H1 (cell line): ENCODE measurements at regions of chr10 and their contacts with region 1.

Region 1: DNA sequence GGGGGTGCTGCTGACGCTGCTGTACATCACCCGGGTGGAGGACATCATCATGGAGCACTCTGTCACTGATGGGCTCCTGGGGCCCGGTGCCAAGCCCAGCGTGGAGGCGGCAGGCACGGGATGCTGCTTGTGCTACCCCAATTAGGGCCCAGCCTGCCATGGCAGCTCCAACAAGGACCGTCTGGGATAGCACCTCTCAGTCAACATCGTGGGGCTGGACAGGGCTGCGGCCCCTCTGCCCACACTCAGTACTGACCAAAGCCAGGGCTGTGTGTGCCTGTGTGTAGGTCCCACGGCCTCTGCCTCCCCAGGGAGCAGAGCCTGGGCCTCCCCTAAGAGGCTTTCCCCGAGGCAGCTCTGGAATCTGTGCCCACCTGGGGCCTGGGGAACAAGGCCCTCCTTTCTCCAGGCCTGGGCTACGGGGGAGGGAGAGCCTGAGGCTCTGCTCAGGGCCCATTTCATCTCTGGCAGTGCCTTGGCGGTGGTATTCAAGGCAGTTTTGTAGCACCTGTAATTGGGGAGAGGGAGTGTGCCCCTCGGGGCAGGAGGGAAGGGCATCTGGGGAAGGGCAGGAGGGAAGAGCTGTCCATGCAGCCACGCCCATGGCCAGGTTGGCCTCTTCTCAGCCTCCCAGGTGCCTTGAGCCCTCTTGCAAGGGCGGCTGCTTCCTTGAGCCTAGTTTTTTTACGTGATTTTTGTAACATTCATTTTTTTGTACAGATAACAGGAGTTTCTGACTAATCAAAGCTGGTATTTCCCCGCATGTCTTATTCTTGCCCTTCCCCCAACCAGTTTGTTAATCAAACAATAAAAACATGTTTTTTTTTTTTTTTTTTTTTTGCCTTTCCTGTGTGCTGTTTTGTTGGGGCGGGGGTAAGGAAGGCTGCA is 55.8 kb downstream of the TSPAN15 start:
- DNase-seq: no peak
- H3K4me3 ChIP-seq: peak overlapping the region in 1 of 4 experiments; percentile 29; a peak in 1 of 8 replicates
- H3K27ac ChIP-seq: no peak overlapping the region
- H3K4me1 ChIP-seq: peaks cover 0 to 6% (median 5%) of the 10 kb centered on the region in 4 experiments; a peak in 5 of 7 replicates
- H3K27me3 ChIP-seq: no peaks in the 10 kb centered on the region
- CTCF ChIP-seq: no peak
- EP300 ChIP-seq: no peak
- POLR2A ChIP-seq: no peak
- RAD21 ChIP-seq: no peak

Region 2: DNA sequence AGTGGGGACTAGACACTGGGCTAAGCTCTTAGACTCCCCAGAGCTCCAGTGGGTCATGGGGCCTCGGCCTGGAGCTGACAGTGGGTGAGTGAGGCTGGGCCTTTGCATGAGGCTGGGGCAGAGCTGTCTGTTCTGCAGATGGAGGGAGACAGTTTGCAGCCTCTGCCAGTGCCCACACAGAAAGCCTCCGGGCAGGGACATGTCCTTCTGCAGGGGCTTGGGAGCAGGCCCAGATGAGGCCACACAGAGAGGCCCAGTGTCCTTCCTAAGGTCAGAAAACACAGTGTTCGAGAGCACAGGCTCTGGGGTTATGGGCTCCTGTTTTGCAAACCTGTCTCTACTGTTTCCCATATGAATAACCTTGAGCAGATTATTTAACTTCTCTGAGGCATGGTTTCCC is 253.9 kb before region 1 on chr10:
- CTCF ChIA-PET with region 1: no interaction called
- POLR2A ChIA-PET with region 1: no interaction called
- DNase-seq: no peak
- H3K4me3 ChIP-seq: no peak overlapping the region
- H3K27ac ChIP-seq: no peak overlapping the region
- H3K4me1 ChIP-seq: no peaks in the 10 kb centered on the region; a peak in 1 of 7 replicates
- H3K27me3 ChIP-seq: no peaks in the 10 kb centered on the region
- CTCF ChIP-seq: no peak
- EP300 ChIP-seq: no peak
- POLR2A ChIP-seq: no peak
- RAD21 ChIP-seq: no peak

Region 3: DNA sequence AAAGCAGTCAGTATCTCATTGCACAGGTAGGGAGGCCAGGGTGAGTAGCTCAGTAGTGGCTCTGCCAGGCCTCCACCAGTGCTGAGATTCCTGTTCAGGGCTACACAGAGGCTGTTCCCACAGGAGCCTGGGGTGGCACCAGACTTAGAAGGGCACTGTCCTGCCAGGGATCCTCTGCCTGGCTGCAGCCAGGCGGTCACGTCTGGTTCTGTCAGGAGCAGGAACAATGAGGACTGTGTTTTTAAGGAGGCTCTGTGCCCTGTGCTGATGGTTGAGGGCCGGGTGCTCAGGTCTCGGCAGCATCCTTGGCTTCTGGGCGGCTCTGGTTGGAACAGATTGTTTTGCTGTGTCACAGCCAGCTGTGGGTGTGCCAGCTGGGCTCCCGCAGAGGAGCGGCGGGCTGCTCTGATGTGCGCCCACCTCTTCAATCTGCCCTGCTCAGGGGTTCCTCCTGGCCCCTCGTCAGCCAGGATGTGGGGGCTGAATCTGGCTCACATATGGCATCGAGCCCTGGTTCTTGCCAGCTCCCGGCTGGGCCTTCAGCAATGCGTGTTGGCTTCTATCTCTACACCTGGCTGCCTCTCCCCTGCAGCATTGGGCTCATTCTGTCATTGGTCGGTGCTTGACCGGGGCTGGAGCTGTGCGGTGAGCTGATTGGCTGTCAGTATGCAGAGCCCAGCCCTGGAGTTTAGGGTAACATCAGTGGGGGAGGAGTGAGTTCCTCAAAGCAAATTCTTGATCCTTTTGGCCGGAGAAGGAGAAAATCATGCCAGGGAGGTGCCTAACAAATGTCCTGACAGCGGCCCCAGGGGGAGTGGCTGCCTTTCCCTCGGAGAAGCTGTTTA is 131.5 kb before region 1 on chr10:
- CTCF ChIA-PET with region 1: no interaction called
- POLR2A ChIA-PET with region 1: no interaction called
- DNase-seq: peak; percentile 39 to 77
- H3K4me3 ChIP-seq: 0 out of 8 replicates have a peak overlapping the region, but pooled peaks of 1 of the 4 experiments have one; percentile 11
- H3K27ac ChIP-seq: peak overlapping the region; percentile 51; the same call in 1 of the 2 replicates
- H3K4me1 ChIP-seq: peaks cover 0 to 20% (median 12%) of the 10 kb centered on the region in 4 experiments; a peak in 6 of 7 replicates
- H3K27me3 ChIP-seq: no peaks in the 10 kb centered on the region
- CTCF ChIP-seq: no peak
- EP300 ChIP-seq: no peak
- POLR2A ChIP-seq: peak in 1 of 2 experiments; percentile 28; a peak in 1 of 3 replicates
- RAD21 ChIP-seq: no peak; a peak in 1 of 4 replicates

Region 4: GRCh38 chr10:69425511-69426298 is 81.4 kb before region 1 on chr10:
- CTCF ChIA-PET with region 1: interaction called, 26 read pairs
- POLR2A ChIA-PET with region 1: no interaction called
- DNase-seq: no peak
- H3K4me3 ChIP-seq: no peak overlapping the region
- H3K27ac ChIP-seq: no peak overlapping the region
- H3K4me1 ChIP-seq: no peaks in the 10 kb centered on the region
- H3K27me3 ChIP-seq: no peaks in the 10 kb centered on the region
- CTCF ChIP-seq: no peak
- EP300 ChIP-seq: no peak
- POLR2A ChIP-seq: no peak
- RAD21 ChIP-seq: no peak

Region 5: GRCh38 chr10:69464801-69465401 is 42.2 kb before region 1 on chr10:
- CTCF ChIA-PET with region 1: interaction called, 12 read pairs
- POLR2A ChIA-PET with region 1: no interaction called
- DNase-seq: no peak
- H3K4me3 ChIP-seq: no peak overlapping the region
- H3K27ac ChIP-seq: no peak overlapping the region
- H3K4me1 ChIP-seq: peaks cover 0 to 5% (median 0%) of the 10 kb centered on the region in 4 experiments; a peak in 3 of 7 replicates
- H3K27me3 ChIP-seq: no peaks in the 10 kb centered on the region
- CTCF ChIP-seq: peak in 1 of 3 experiments; percentile 5; a peak in 1 of 4 replicates
- EP300 ChIP-seq: no peak
- POLR2A ChIP-seq: no peak
- RAD21 ChIP-seq: no peak

Region 6: DNA sequence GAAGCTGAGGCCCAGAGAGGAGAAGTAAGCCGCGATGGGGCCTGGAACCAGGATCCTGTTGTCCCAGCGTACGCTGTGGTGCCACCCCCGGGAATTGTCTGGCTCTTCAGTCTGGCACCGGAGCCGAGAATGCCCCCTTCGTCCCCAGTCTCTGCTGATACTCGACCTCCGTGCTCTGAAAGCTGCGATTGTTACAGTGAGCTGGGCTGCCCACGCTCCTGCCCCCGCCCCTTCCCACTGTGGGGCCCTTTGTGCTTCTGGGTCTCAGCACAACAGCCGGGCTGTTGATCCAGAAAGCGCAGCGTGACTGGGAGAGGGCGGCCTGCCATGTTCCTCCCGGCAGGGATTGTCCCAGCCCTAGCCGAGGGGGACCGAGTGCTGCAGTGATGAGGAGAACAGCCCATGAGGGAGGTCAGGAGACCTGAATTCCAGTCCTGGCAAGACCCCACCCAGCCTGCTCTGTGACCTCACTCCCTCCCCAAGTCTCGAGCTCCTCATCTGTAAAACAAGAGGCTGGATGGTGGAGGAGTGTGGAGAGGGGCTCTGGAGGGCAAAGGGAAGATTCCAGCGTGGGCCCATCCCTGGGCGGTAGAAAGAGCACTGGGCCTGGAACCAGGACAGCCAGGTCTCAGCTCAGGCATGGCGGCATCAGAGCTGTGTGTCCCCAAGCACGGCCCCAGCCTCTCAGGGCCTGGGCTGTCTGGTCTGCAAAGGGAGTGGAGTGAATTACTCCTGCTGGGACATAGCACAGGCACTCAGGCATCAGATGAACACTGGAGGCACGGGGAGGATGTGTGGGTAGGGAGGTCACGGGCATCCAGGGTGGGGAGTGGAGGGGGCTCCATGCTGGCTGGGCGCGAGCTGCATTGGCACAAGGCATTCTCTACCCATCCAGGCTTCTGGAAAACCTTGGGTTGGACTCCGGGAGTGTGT is 12.2 kb before region 1 on chr10:
- CTCF ChIA-PET with region 1: interaction called, 17 read pairs
- POLR2A ChIA-PET with region 1: interaction called, 3 read pairs
- DNase-seq: no peak
- H3K4me3 ChIP-seq: no peak overlapping the region
- H3K27ac ChIP-seq: no peak overlapping the region; the same call in 1 of the 2 replicates
- H3K4me1 ChIP-seq: peaks cover 0 to 7% (median 1%) of the 10 kb centered on the region in 4 experiments; a peak in 1 of 7 replicates
- H3K27me3 ChIP-seq: no peaks in the 10 kb centered on the region
- CTCF ChIP-seq: no peak
- EP300 ChIP-seq: no peak
- POLR2A ChIP-seq: no peak
- RAD21 ChIP-seq: no peak